ENCODE measurements at regions of chrX and their contacts with region 1.

Region 1: GRCh38 chrX:119791438-119792231 is at the start of gene RPL39:
- DNase-seq: peak; percentile 67 to 87 (median 79)
- H3K4me3 ChIP-seq: peak within 1 kb of the TSS; percentile 72
- H3K4me3 Mint-ChIP-seq: peak within 1 kb of the TSS; percentile 94 to 98 (median 96)
- H3K27ac ChIP-seq: peak within 1 kb of the TSS; percentile 91
- H3K27ac Mint-ChIP-seq: peak within 1 kb of the TSS; percentile 89 to 99 (median 98)
- H3K4me1 ChIP-seq: peaks cover 25% of the 10 kb centered on the region
- H3K4me1 Mint-ChIP-seq: peaks cover 25 to 50% (median 38%) of the 10 kb centered on the region in 3 donors
- H3K27me3 ChIP-seq: no peaks in the 10 kb centered on the region
- H3K27me3 Mint-ChIP-seq: peaks cover 0 to 4% of the 10 kb centered on the region in 2 donors
- total RNA-seq, gene RPL39: 2,337 to 2,451 TPM

Region 2: GRCh38 chrX:119721487-119721886 is 70.1 kb before region 1 on chrX:
- CTCF ChIA-PET with region 1: no interaction called
- POLR2A ChIA-PET with region 1: no interaction called
- DNase-seq: no peak
- H3K4me3 ChIP-seq: no peak overlapping the region
- H3K4me3 Mint-ChIP-seq: no peak overlapping the region
- H3K27ac ChIP-seq: no peak overlapping the region
- H3K27ac Mint-ChIP-seq: no peak overlapping the region
- H3K4me1 ChIP-seq: no peaks in the 10 kb centered on the region
- H3K4me1 Mint-ChIP-seq: no peaks in the 10 kb centered on the region
- H3K27me3 ChIP-seq: no peaks in the 10 kb centered on the region
- H3K27me3 Mint-ChIP-seq: no peaks in the 10 kb centered on the region

Region 3: GRCh38 chrX:119757979-119758730 is 33.5 kb before region 1 on chrX and contains the start of gene SOWAHD:
- CTCF ChIA-PET with region 1: interaction called, 5 read pairs
- POLR2A ChIA-PET with region 1: interaction called, 19 read pairs
- DNase-seq: peak; percentile 21 to 57 (median 31)
- H3K4me3 ChIP-seq: peak within 1 kb of the TSS; percentile 47
- H3K4me3 Mint-ChIP-seq: peak within 1 kb of the TSS; percentile 69 to 85 (median 75)
- H3K27ac ChIP-seq: no peak within 1 kb of the TSS
- H3K27ac Mint-ChIP-seq: peak within 1 kb of the TSS; percentile 90 to 98 (median 94)
- H3K4me1 ChIP-seq: peaks cover 43% of the 10 kb centered on the region
- H3K4me1 Mint-ChIP-seq: peaks cover 43 to 64% (median 44%) of the 10 kb centered on the region in 3 donors
- H3K27me3 ChIP-seq: no peaks in the 10 kb centered on the region
- H3K27me3 Mint-ChIP-seq: peaks cover 0 to 2% of the 10 kb centered on the region in 2 donors
- total RNA-seq, gene SOWAHD: 0.33 to 0.55 TPM

Region 4: DNA sequence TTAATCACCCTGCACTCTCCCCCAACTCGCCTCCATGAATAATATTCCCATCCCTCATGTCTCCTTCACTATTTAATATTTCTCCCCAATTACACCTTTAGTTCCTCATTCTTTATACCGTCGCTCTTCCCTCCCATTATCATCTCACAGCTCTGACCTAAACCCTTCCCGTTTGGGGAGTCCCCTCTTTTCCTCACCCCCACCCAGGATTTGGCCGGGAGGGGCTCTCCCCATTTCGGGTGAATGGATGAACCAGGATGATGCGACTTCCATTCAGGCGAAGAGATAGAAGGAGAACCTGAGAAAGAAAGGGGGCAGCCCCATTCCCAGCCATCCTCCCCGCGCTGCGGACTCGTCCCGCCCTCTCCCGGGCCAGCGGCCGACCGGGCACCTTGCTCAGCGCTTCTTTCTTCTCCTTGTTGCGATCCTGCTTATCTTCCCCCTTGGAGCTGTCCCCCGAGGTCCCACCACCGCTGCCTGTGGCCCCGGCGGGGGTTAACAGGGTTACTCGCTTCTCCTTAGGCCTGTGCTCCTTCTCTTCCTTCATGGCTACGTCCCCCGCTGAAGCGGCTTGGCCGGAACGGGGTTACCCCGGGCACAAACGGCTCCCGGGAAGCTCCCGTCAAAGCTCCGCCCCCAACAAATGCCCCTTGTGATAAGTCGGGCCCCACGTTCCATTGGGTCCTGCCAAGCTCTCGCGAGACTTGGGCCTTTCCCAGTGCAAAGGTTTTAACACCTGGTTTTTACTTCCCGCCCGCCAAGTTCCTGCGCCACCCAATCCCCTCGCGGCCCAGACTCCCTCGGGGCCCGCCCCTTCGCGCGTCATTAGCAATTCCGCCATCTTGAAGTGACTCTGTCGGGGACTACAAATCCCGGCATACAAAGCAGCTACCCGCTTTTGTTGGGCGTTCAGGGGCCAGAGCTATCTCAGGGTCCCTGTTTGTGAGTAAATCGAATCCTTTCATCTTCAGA is 61.0 kb after region 1 on chrX and contains the start of gene UPF3B:
- CTCF ChIA-PET with region 1: no interaction called
- POLR2A ChIA-PET with region 1: interaction called, 10 read pairs
- DNase-seq: peak; percentile 88 to 98 (median 93)
- H3K4me3 ChIP-seq: peak within 1 kb of the TSS; percentile 74
- H3K4me3 Mint-ChIP-seq: peak within 1 kb of the TSS; percentile 97 to 99 (median 99)
- H3K27ac ChIP-seq: peak within 1 kb of the TSS; percentile 91
- H3K27ac Mint-ChIP-seq: peak within 1 kb of the TSS; percentile 85 to 100 (median 98)
- H3K4me1 ChIP-seq: no peaks in the 10 kb centered on the region
- H3K4me1 Mint-ChIP-seq: peaks cover 14 to 37% (median 15%) of the 10 kb centered on the region in 3 donors
- H3K27me3 ChIP-seq: no peaks in the 10 kb centered on the region
- H3K27me3 Mint-ChIP-seq: peaks cover 7 to 10% of the 10 kb centered on the region in 2 donors
- total RNA-seq, gene UPF3B: 19.9 to 22.7 TPM

Region 5: DNA sequence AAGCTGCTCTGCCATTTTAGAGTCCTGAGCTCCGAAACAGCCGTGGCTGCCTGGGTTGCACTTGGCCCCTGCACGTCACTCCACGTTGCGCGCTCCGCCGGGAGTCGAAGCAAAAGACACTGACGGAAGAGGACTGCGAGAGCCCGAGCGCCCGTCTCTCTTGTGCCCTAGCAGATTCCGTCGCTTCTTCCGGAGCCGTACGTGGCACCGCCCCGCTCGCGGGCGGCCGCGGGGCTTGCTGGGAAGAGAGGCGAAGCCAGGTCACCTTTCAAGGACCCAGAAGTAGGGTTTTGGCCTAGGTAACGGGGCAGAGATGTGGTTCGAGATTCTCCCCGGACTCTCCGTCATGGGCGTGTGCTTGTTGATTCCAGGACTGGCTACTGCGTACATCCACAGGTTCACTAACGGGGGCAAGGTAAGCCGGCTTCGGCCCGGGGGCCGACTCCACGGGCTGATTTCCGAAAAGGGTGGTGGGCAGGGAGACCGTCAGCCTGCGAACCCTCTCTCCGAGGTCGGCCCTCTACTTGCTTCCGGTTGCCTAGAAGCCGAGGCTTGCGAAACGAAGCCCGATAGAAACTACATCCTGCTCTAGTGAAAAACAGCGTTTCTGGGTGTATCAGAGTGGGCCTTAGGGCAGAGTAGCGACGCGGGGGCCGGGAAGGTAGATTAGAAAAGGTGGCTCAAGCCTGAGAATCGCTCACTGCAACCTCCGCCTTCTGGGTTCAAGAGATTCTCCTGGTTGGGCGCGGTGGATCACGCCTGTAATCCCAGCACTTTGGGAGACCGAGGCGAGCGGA is 80.2 kb after region 1 on chrX and contains the starts of genes NDUFA1 and RNF113A:
- CTCF ChIA-PET with region 1: interaction called, 9 read pairs
- POLR2A ChIA-PET with region 1: interaction called, 16 read pairs
- DNase-seq: peak; percentile 71 to 91 (median 85)
- H3K4me3 ChIP-seq: peak within 1 kb of the TSS; percentile 93
- H3K4me3 Mint-ChIP-seq: peak within 1 kb of the TSS; percentile 97 to 100 (median 99)
- H3K27ac ChIP-seq: peak within 1 kb of the TSS; percentile 95
- H3K27ac Mint-ChIP-seq: peak within 1 kb of the TSS; percentile 98 to 100 (median 99)
- H3K4me1 ChIP-seq: peaks cover 9% of the 10 kb centered on the region
- H3K4me1 Mint-ChIP-seq: peaks cover 26 to 29% (median 28%) of the 10 kb centered on the region in 3 donors
- H3K27me3 ChIP-seq: no peaks in the 10 kb centered on the region
- H3K27me3 Mint-ChIP-seq: peaks cover 0 to 2% of the 10 kb centered on the region in 2 donors
- total RNA-seq, gene NDUFA1: 97.3 to 98.5 TPM
- total RNA-seq, gene RNF113A: 22.9 to 25.1 TPM

Measured in CD8-positive, alpha-beta memory T cell (primary cell).